Transverse colon (tissue), 4 donors: ENCODE measurements at regions of chr5 and their contacts with region 1.

Region 1: DNA sequence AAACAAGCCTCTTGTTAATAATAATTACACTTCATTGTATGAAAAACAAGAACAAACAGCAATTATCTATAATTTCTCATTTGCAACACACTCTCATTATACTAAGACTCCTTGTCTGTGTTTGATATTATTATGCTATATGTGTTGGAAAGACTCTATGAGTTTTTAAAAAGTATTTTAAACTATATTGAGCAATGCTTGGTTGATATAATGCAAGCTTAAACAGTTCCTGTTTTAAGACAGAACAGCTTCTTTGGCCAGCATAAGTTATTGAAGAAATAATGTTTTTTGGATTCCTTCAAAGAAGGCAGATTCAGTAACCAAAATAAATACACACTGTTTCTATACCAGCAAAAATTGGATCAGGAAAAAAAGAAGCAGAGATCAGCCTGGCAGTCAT is 871.4 kb downstream of the MAT2B start:
- DNase-seq: no peak
- H3K4me3 ChIP-seq: no peak overlapping the region
- H3K27ac ChIP-seq: no peak overlapping the region
- H3K4me1 ChIP-seq: no peaks in the 10 kb centered on the region
- H3K27me3 ChIP-seq: no peaks in the 10 kb centered on the region
- CTCF ChIP-seq: no peak
- EP300 ChIP-seq: no peak
- POLR2A ChIP-seq: no peak

Region 2: DNA sequence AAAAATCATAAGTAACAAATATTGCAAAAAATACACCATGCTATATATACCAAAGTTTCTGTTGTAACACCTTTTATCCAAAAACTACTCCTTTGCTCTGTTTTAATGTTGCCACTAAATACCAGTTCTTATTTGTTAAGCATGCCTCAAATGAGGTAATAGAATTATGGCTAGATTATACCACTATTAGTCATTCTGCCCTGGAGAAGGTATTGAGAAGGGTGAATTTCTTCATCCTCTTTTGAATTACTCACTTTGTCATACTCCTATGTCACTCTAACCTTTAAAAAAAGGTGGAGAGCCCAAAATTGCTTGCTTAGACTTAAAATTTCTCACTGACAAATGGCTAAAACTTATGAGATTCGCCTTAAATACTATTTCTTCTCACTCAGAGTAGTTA is 120.5 kb before region 1 on chr5:
- in situ Hi-C with region 1: no loop called
- intact Hi-C with region 1: loop called (anchors 5 kb)
- DNase-seq: no peak
- H3K4me3 ChIP-seq: no peak overlapping the region
- H3K27ac ChIP-seq: no peak overlapping the region
- H3K4me1 ChIP-seq: no peaks in the 10 kb centered on the region
- H3K27me3 ChIP-seq: no peaks in the 10 kb centered on the region
- CTCF ChIP-seq: no peak
- EP300 ChIP-seq: no peak
- POLR2A ChIP-seq: no peak